ENCODE measurements at regions of chrX and their contacts with region 1.

Region 1: DNA sequence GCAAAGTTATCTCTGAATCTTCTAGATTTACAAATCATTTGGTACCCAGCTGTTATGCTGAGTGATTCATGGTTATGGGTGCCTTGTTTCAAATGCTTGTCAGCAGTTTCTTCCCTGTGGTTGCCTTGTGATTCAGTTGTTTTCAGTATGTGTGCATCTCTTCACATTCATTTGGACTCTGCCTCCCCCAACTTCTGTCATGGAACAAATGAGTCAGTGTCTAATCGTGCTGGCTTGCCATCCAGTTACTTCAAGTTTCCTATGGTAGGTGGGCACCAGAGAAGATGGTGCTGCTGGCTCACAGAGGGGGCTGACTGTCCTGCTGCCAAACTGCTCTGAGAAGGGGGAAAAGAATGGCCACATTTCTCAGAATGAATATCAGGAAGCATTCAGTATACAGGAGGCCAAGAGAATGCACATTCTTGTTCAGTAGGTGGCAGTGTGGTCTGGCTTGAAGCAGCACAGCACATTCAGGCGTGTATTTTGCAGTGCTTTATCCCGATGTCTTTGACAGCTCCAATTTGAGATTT is 260.9 kb downstream of the GLUD2 start:
- DNase-seq: peak; percentile 78
- H3K4me3 Mint-ChIP-seq: peak overlapping the region; percentile 48
- H3K27ac Mint-ChIP-seq: peak overlapping the region; percentile 87
- H3K4me1 Mint-ChIP-seq: peaks cover 24% of the 10 kb centered on the region
- H3K27me3 Mint-ChIP-seq: peaks cover 2% of the 10 kb centered on the region

Region 2: GRCh38 chrX:119753571-119754257 is 1554.6 kb before region 1 on chrX:
- CTCF ChIA-PET with region 1: no interaction called
- POLR2A ChIA-PET with region 1: no interaction called
- intact Hi-C with region 1: loop called (anchors 5 kb)
- DNase-seq: peak; percentile 54
- H3K4me3 Mint-ChIP-seq: peak overlapping the region; percentile 16
- H3K27ac Mint-ChIP-seq: peak overlapping the region; percentile 90
- H3K4me1 Mint-ChIP-seq: peaks cover 40% of the 10 kb centered on the region
- H3K27me3 Mint-ChIP-seq: no peaks in the 10 kb centered on the region

Region 3: GRCh38 chrX:120677004-120677652 is 631.2 kb before region 1 on chrX:
- CTCF ChIA-PET with region 1: no interaction called
- POLR2A ChIA-PET with region 1: no interaction called
- intact Hi-C with region 1: loop called (anchors 5 kb)
- DNase-seq: no peak
- H3K4me3 Mint-ChIP-seq: no peak overlapping the region
- H3K27ac Mint-ChIP-seq: peak overlapping the region; percentile 69
- H3K4me1 Mint-ChIP-seq: peaks cover 21% of the 10 kb centered on the region
- H3K27me3 Mint-ChIP-seq: no peaks in the 10 kb centered on the region

Region 4: DNA sequence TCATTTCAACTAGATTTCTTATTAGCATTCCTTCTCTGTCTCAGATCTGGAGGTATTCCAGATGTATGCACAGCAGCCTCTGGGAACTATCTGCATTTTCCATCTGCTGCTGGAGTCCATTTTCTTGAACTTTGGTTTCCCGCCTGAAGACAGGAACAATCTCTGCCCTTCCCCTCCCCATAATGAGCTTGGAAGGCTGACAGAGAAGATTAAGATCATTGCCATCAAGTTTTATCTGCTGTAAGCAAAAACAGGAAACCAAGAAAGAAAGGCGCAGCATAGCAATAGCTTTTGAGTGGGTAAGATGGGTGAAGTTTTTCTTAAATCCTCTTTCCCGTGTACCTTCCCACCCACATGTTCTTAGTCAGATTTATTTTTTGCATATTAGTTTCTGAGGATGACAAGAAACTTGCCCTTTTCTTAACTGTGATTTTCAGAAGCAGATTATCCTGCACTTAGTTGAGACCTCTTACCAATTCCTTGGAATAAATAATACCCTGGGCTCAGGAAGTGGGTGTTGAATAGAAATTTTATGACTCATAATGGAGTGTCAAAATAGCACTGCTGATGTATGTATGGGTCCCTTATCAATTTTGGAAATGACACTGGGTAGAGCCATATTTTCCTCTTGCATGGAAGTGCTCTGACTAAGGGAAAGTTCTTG is 511.0 kb before region 1 on chrX:
- CTCF ChIA-PET with region 1: interaction called, 3 read pairs
- POLR2A ChIA-PET with region 1: interaction called, 3 read pairs
- intact Hi-C with region 1: loop called (anchors 1 kb)
- DNase-seq: no peak
- H3K4me3 Mint-ChIP-seq: no peak overlapping the region
- H3K27ac Mint-ChIP-seq: peak overlapping the region; percentile 76
- H3K4me1 Mint-ChIP-seq: peaks cover 68% of the 10 kb centered on the region
- H3K27me3 Mint-ChIP-seq: no peaks in the 10 kb centered on the region

Region 5: GRCh38 chrX:121160987-121161386 is 147.4 kb before region 1 on chrX:
- CTCF ChIA-PET with region 1: no interaction called
- POLR2A ChIA-PET with region 1: no interaction called
- intact Hi-C with region 1: loop called (anchors 1 kb)
- DNase-seq: no peak
- H3K4me3 Mint-ChIP-seq: peak overlapping the region; percentile 21
- H3K27ac Mint-ChIP-seq: peak overlapping the region; percentile 74
- H3K4me1 Mint-ChIP-seq: peaks cover 32% of the 10 kb centered on the region
- H3K27me3 Mint-ChIP-seq: no peaks in the 10 kb centered on the region

Region 6: GRCh38 chrX:121256647-121257046 is 51.7 kb before region 1 on chrX:
- CTCF ChIA-PET with region 1: no interaction called
- POLR2A ChIA-PET with region 1: no interaction called
- intact Hi-C with region 1: loop called (anchors 1 kb)
- DNase-seq: no peak
- H3K4me3 Mint-ChIP-seq: no peak overlapping the region
- H3K27ac Mint-ChIP-seq: no peak overlapping the region
- H3K4me1 Mint-ChIP-seq: peaks cover 14% of the 10 kb centered on the region
- H3K27me3 Mint-ChIP-seq: no peaks in the 10 kb centered on the region

Region 7: GRCh38 chrX:121579016-121579760 is 270.8 kb after region 1 on chrX:
- CTCF ChIA-PET with region 1: no interaction called
- POLR2A ChIA-PET with region 1: no interaction called
- intact Hi-C with region 1: loop called (anchors 1 kb)
- DNase-seq: peak; percentile 13
- H3K4me3 Mint-ChIP-seq: no peak overlapping the region
- H3K27ac Mint-ChIP-seq: no peak overlapping the region
- H3K4me1 Mint-ChIP-seq: peaks cover 8% of the 10 kb centered on the region
- H3K27me3 Mint-ChIP-seq: no peaks in the 10 kb centered on the region

Measured in activated CD4-positive, alpha-beta memory T cell treated with anti-CD3 and anti-CD28 coated beads for 36 hours (primary cell).